Keratinocyte (primary cell): ENCODE measurements at regions of chr3 and their contacts with region 1.

Region 1: GRCh38 chr3:55485211-55485791 is 1.8 kb downstream of the WNT5A start:
- DNase-seq: no peak
- H3K4me3 ChIP-seq: peak overlapping the region; percentile 48 to 89 (median 87)
- H3K27ac ChIP-seq: peak overlapping the region; percentile 56
- H3K4me1 ChIP-seq: peaks cover 46% of the 10 kb centered on the region
- H3K27me3 ChIP-seq: no peaks in the 10 kb centered on the region
- CTCF ChIP-seq: peak in 2 of 3 experiments; percentile 20 to 85

Region 2: DNA sequence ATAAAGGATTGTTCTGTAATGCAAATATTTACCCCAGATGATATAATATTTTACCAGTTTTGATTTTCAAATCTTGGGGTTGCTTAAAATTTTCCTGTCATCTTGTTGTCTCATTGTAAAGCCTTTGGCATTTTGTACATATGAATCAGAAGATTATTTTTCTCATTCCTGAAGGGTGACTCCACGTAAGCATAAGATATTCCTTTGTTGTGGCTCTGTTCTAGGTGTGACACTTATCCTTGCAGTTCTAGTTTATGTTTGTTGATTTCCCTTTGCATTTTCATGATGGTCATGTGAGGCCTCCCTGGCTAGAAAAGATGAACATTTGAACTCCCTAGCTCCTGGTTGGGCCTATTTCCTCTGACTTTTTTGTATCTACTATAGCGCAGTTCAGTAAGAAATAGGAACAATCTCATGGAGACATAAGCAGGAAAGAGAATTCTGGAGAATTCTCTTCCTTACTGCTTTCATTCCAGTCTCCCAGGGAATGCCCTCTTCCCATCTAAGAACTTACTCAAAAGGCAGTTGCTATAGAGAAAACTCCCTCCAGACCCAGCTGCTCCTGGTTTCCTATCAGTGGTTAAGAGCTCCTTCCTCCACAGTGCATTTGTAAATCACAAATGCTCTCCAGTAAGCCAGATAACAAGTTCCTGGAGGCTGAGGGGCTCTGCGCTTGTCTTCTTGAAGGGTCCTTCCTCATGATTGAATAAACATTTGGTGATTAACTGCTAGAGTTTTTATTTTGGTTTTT is 122.9 kb before region 1 on chr3:
- dilution Hi-C with region 1: no loop called
- DNase-seq: no peak
- H3K4me3 ChIP-seq: no peak overlapping the region
- H3K27ac ChIP-seq: no peak overlapping the region
- H3K4me1 ChIP-seq: no peaks in the 10 kb centered on the region
- H3K27me3 ChIP-seq: no peaks in the 10 kb centered on the region
- CTCF ChIP-seq: no peak

Region 3: GRCh38 chr3:55746808-55747413 is 261.6 kb after region 1 on chr3:
- dilution Hi-C with region 1: loop called (anchors 25 kb)
- DNase-seq: no peak
- H3K4me3 ChIP-seq: no peak overlapping the region
- H3K27ac ChIP-seq: no peak overlapping the region
- H3K4me1 ChIP-seq: peaks cover 8% of the 10 kb centered on the region
- H3K27me3 ChIP-seq: no peaks in the 10 kb centered on the region
- CTCF ChIP-seq: peak in 2 of 3 experiments; percentile 14 to 19

Region 4: DNA sequence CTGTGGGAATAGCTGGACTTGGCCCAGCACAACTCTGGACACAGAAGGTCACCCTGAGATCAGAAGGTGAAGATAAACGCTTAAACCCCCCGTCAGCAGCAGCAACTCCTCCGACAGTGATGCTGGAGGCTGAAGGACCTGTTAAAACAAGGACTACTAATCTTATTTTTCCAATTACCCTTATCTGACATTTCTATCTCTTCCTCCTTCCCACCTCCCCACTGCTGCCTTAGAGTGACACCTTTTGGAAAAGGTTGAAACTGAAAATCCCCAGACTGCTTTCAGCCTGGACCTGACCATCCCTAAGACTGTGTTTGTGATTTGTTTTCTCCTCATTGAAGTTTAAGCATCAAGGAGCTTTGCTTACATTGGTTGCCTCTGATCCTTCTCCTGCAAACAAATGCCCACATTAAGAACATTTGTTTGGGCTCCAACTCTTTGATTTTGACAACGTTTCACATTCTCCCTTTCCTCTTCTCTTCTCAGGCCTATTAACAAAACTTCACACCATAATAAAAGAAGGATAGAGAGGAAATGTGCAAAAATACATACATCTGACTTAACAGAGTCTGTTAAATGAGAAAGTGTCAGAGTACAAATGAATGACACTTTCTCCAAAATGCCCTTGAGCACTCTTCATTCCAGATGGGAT is 412.4 kb after region 1 on chr3:
- dilution Hi-C with region 1: loop called (anchors 25 kb)
- DNase-seq: no peak
- H3K4me3 ChIP-seq: no peak overlapping the region
- H3K27ac ChIP-seq: no peak overlapping the region
- H3K4me1 ChIP-seq: no peaks in the 10 kb centered on the region
- H3K27me3 ChIP-seq: peaks cover 2% of the 10 kb centered on the region
- CTCF ChIP-seq: peak; percentile 62 to 76 (median 71)